ENCODE measurements at regions of chr7 and their contacts with region 1.

Region 1: DNA sequence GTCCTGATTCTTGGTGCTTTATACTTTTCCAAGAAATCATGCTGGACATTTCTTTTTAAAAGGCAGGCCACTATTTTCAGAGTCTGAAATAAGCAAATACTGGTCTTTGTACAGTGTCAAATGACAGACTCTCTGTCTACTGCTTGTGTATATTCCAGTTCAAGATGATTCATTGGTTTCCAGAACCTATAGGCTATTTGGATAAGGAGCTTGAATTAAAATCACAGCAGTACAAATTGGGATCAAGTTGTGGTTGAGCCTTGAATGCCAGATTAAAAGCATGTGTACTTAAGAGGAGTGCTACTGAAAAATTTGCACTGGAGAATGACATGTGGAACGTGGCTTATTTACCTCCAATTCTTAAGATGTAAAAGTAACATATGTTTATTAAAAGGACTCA is 10.7 kb downstream of the KMT2E start:
- DNase-seq: no peak
- H3K4me3 ChIP-seq: no peak overlapping the region
- H3K27ac ChIP-seq: no peak overlapping the region
- H3K4me1 ChIP-seq: peaks cover 9 to 41% (median 31%) of the 10 kb centered on the region in 4 experiments
- H3K27me3 ChIP-seq: no peaks in the 10 kb centered on the region

Region 2: GRCh38 chr7:105036217-105037168 is 11.8 kb after region 1 on chr7:
- CTCF ChIA-PET with region 1: interaction called, 15 read pairs
- POLR2A ChIA-PET with region 1: no interaction called
- DNase-seq: no peak
- H3K4me3 ChIP-seq: no peak overlapping the region
- H3K27ac ChIP-seq: no peak overlapping the region
- H3K4me1 ChIP-seq: peaks cover 0 to 12% (median 3%) of the 10 kb centered on the region in 4 experiments
- H3K27me3 ChIP-seq: no peaks in the 10 kb centered on the region

Region 3: GRCh38 chr7:105046414-105046813 is 21.7 kb after region 1 on chr7:
- CTCF ChIA-PET with region 1: interaction called, 15 read pairs
- POLR2A ChIA-PET with region 1: no interaction called
- DNase-seq: no peak
- H3K4me3 ChIP-seq: no peak overlapping the region
- H3K27ac ChIP-seq: no peak overlapping the region
- H3K4me1 ChIP-seq: no peaks in the 10 kb centered on the region
- H3K27me3 ChIP-seq: no peaks in the 10 kb centered on the region

Region 4: GRCh38 chr7:105055621-105056020 is 30.9 kb after region 1 on chr7:
- CTCF ChIA-PET with region 1: interaction called, 10 read pairs
- POLR2A ChIA-PET with region 1: interaction called, 4 read pairs
- DNase-seq: peak in 1 of 3 donors; percentile 57
- H3K4me3 ChIP-seq: no peak overlapping the region
- H3K27ac ChIP-seq: no peak overlapping the region
- H3K4me1 ChIP-seq: no peaks in the 10 kb centered on the region
- H3K27me3 ChIP-seq: no peaks in the 10 kb centered on the region